Mammary epithelial cell (primary cell): ENCODE measurements at regions of chr11 and their contacts with region 1.

Region 1: GRCh38 chr11:96389720-96390487 is at the starts of genes CCDC82 and JRKL:
- DNase-seq: peak; percentile 97
- H3K4me3 ChIP-seq: peak within 1 kb of the TSS; percentile 73 to 97 (median 93)
- H3K27ac ChIP-seq: peak within 1 kb of the TSS; percentile 90
- H3K4me1 ChIP-seq: peaks cover 14% of the 10 kb centered on the region
- H3K27me3 ChIP-seq: no peaks in the 10 kb centered on the region
- CTCF ChIP-seq: no peak
- total RNA-seq, gene CCDC82: 14.3 to 17.9 TPM
- total RNA-seq, gene JRKL: 7.2 to 9.6 TPM

Region 2: GRCh38 chr11:95829580-95830259 is 560.2 kb before region 1 on chr11:
- CTCF ChIA-PET with region 1: no interaction called
- dilution Hi-C with region 1: no loop called
- in situ Hi-C with region 1: loop called (anchors 10 to 25 kb)
- intact Hi-C with region 1: no loop called
- DNase-seq: peak; percentile 21
- H3K4me3 ChIP-seq: no peak overlapping the region
- H3K27ac ChIP-seq: no peak overlapping the region
- H3K4me1 ChIP-seq: no peaks in the 10 kb centered on the region
- H3K27me3 ChIP-seq: no peaks in the 10 kb centered on the region
- CTCF ChIP-seq: no peak

Region 3: GRCh38 chr11:95849087-95849825 is 540.6 kb before region 1 on chr11:
- CTCF ChIA-PET with region 1: interaction called, 10 read pairs
- dilution Hi-C with region 1: no loop called
- in situ Hi-C with region 1: loop called in 1 of 2 experiments (anchors 25 kb)
- intact Hi-C with region 1: no loop called
- DNase-seq: peak; percentile 67
- H3K4me3 ChIP-seq: no peak overlapping the region
- H3K27ac ChIP-seq: no peak overlapping the region
- H3K4me1 ChIP-seq: no peaks in the 10 kb centered on the region
- H3K27me3 ChIP-seq: no peaks in the 10 kb centered on the region
- CTCF ChIP-seq: peak; percentile 47 to 53

Region 4: GRCh38 chr11:96012086-96012824 is 377.6 kb before region 1 on chr11:
- CTCF ChIA-PET with region 1: no interaction called
- dilution Hi-C with region 1: no loop called
- in situ Hi-C with region 1: no loop called
- intact Hi-C with region 1: loop called (anchors 5 kb)
- DNase-seq: peak; percentile 81
- H3K4me3 ChIP-seq: no peak overlapping the region
- H3K27ac ChIP-seq: no peak overlapping the region
- H3K4me1 ChIP-seq: peaks cover 19% of the 10 kb centered on the region
- H3K27me3 ChIP-seq: no peaks in the 10 kb centered on the region
- CTCF ChIP-seq: peak; percentile 64 to 68

Region 5: GRCh38 chr11:96098514-96099241 is 291.2 kb before region 1 on chr11:
- CTCF ChIA-PET with region 1: no interaction called
- dilution Hi-C with region 1: no loop called
- in situ Hi-C with region 1: no loop called
- intact Hi-C with region 1: loop called (anchors 5 kb)
- DNase-seq: peak; percentile 89
- H3K4me3 ChIP-seq: no peak overlapping the region
- H3K27ac ChIP-seq: peak overlapping the region; percentile 90
- H3K4me1 ChIP-seq: peaks cover 61% of the 10 kb centered on the region
- H3K27me3 ChIP-seq: no peaks in the 10 kb centered on the region
- CTCF ChIP-seq: no peak

Region 6: GRCh38 chr11:96338910-96339705 is 50.8 kb before region 1 on chr11:
- CTCF ChIA-PET with region 1: no interaction called
- dilution Hi-C with region 1: no loop called
- in situ Hi-C with region 1: no loop called
- intact Hi-C with region 1: no loop called
- DNase-seq: peak; percentile 92
- H3K4me3 ChIP-seq: peak overlapping the region; percentile 12 to 45 (median 27)
- H3K27ac ChIP-seq: peak overlapping the region; percentile 85
- H3K4me1 ChIP-seq: peaks cover 44% of the 10 kb centered on the region
- H3K27me3 ChIP-seq: no peaks in the 10 kb centered on the region
- CTCF ChIP-seq: peak in 1 of 2 donors; percentile 31

Region 7: GRCh38 chr11:96413408-96413807 is 23.5 kb after region 1 on chr11:
- CTCF ChIA-PET with region 1: no interaction called
- dilution Hi-C with region 1: no loop called
- in situ Hi-C with region 1: no loop called
- intact Hi-C with region 1: no loop called
- DNase-seq: no peak
- H3K4me3 ChIP-seq: no peak overlapping the region
- H3K27ac ChIP-seq: no peak overlapping the region
- H3K4me1 ChIP-seq: no peaks in the 10 kb centered on the region
- H3K27me3 ChIP-seq: no peaks in the 10 kb centered on the region
- CTCF ChIP-seq: no peak

Region 8: DNA sequence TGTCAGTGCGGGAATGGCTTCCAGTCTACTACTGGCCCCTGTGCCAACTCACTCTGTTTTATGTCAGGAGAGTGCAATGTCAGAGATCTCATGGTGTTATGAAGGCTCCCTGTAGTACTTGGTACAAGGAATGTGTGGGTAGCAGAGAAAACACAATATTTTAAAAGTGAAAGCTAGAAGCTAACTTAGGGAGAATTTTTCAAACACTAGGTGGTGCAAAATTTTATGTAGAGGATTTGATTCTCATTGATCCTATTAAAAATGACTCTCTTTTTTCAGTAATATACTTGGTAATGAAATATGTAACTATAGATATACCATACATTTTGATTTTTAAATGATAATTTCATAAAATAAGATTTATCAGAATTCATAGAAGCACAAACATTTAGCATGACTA is 134.6 kb after region 1 on chr11:
- CTCF ChIA-PET with region 1: no interaction called
- dilution Hi-C with region 1: no loop called
- in situ Hi-C with region 1: no loop called
- intact Hi-C with region 1: no loop called
- DNase-seq: no peak
- H3K4me3 ChIP-seq: no peak overlapping the region
- H3K27ac ChIP-seq: no peak overlapping the region
- H3K4me1 ChIP-seq: no peaks in the 10 kb centered on the region
- H3K27me3 ChIP-seq: no peaks in the 10 kb centered on the region
- CTCF ChIP-seq: peak in 1 of 2 donors; percentile 30